Caco-2 (cell line): ENCODE measurements at regions of chr2 and their contacts with region 1.

Region 1: DNA sequence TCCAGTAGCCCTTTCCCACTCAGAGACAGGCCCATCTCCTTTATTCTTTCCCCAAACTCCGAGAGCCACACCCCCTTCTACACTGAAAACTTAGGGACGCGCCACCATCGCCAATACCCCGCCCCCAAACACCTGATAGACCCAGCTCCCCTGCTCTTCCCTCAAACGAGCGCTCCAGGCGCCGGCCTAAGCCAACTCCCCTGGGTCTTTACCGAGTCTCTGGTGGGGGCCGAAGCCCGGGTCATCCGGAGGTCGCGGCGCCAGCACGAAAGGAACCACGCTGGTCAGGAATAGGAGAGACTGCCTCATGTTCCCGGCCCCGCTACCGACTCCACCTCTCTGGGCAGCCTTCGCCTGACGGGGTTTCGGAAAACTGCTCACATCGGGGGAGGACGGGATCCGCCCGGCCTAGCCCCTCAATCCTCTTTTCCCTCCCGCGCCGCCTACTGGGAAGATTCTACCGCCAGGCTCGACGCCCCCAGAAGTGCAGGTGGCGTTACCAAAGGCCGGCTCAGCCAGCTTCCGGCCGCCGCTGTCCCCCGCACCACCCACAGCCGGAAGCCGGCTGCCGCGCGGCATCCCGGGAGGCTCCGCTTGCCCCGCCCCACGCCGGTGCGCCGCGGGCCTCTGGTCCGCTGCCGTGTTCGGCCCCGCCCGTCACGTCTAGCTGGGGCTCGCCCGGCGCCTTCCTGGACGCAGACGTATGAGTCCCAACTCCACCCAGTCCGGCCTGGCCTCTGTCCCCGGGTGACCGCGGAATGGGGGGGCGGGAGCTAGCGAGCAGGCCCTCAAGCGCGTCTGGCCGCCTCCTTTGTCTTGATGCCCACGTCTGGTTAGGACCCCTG is at the start of gene ADAM17:
- DNase-seq: peak; percentile 97 to 98
- H3K4me3 ChIP-seq: peak within 1 kb of the TSS; percentile 92
- H3K4me3 Mint-ChIP-seq: peak within 1 kb of the TSS; percentile 91
- H3K27ac Mint-ChIP-seq: peak within 1 kb of the TSS; percentile 90
- H3K4me1 ChIP-seq: peaks cover 27% of the 10 kb centered on the region; the same call in 1 of the 2 replicates
- H3K4me1 Mint-ChIP-seq: peaks cover 30% of the 10 kb centered on the region
- H3K27me3 ChIP-seq: no peaks in the 10 kb centered on the region
- H3K27me3 Mint-ChIP-seq: no peaks in the 10 kb centered on the region
- CTCF ChIP-seq: peak; percentile 61 to 69
- total RNA-seq, gene ADAM17: 36.3 and 40.5 TPM in 2 replicates

Region 2: DNA sequence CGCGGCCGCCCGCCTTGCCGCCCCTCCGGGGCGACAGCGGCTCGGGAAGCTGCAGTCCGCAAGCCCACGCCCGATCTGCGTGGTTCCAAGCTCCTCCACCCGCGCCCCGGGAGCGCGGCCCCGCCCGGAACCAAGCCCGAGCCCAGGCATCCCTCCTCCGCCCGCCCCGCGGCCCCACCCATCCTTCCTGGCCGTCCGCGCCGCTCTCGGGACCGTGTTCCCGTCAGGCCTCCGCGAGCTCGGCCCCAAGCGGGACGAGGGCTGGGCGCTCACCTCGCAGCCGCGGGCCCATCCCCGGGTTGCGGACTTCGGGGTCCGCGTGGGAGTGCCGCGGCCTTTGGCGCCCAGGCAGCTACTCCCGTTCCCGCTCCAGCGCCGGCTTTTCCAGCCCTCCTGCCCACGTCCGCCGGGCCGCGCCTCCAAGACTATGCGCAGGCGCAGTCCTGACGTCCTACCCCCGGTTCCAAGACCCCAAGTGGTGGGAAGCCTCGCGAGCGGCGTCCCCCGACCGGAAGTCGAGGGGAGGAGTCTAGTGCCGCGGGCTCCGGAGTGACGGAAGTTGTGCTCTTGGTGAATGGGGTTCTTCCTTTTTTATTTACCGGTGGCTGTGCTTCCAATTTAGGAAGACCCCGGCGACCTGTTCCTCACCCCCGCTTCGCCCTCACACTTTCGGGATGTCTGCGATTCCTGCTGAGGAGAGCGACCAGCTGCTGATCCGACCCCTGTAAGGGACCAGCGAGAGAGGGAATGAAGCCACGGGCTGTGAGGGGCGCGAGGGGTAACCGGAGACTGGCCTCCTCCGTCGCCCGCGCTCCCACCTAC is 132.2 kb before region 1 on chr2 and contains the starts of genes CPSF3 and ITGB1BP1:
- CTCF ChIA-PET with region 1: no interaction called
- POLR2A ChIA-PET with region 1: no interaction called
- intact Hi-C with region 1: loop called (anchors 5 kb)
- DNase-seq: peak; percentile 98 to 99
- H3K4me3 ChIP-seq: peak within 1 kb of the TSS; percentile 89
- H3K4me3 Mint-ChIP-seq: no peak within 1 kb of the TSS
- H3K27ac Mint-ChIP-seq: no peak within 1 kb of the TSS
- H3K4me1 ChIP-seq: peaks cover 9% of the 10 kb centered on the region
- H3K4me1 Mint-ChIP-seq: peaks cover 18% of the 10 kb centered on the region
- H3K27me3 ChIP-seq: no peaks in the 10 kb centered on the region
- H3K27me3 Mint-ChIP-seq: no peaks in the 10 kb centered on the region
- CTCF ChIP-seq: no peak
- total RNA-seq, gene CPSF3: 80.6 and 95.0 TPM in 2 replicates
- total RNA-seq, gene ITGB1BP1: 82.4 and 107 TPM in 2 replicates

Region 3: DNA sequence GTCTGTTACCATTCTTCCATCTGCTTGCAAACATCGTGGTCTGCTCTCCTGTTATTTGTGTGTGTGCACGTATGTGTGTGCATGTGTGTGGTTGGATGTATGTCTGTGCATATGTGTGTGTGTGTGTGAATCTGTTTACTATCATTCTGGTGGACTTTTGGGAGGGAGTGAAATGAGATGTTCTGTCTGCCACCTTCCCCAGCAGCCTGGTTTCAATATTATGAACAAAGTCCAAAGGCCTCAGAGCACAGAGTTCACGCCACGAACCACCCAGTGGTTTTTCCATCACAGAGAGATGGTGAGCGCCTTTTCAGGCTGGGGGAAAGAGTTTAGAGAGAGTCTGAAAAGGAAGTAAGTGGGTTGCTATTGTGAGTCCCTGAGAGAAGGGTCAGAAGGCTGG is 142.4 kb after region 1 on chr2:
- CTCF ChIA-PET with region 1: interaction called, 4 read pairs
- POLR2A ChIA-PET with region 1: no interaction called
- intact Hi-C with region 1: loop called (anchors 1 kb)
- DNase-seq: no peak
- H3K4me3 ChIP-seq: no peak overlapping the region
- H3K4me3 Mint-ChIP-seq: no peak overlapping the region
- H3K27ac Mint-ChIP-seq: peak overlapping the region; percentile 69
- H3K4me1 ChIP-seq: peaks cover 38% of the 10 kb centered on the region
- H3K4me1 Mint-ChIP-seq: peaks cover 19% of the 10 kb centered on the region
- H3K27me3 ChIP-seq: no peaks in the 10 kb centered on the region
- H3K27me3 Mint-ChIP-seq: no peaks in the 10 kb centered on the region
- CTCF ChIP-seq: no peak